Body of pancreas (tissue), 4 donors: ENCODE measurements at regions of chr9 and their contacts with region 1.

Region 1: GRCh38 chr9:6757456-6758247 is at the start of gene KDM4C:
- DNase-seq: peak; percentile 95 to 97 (median 96)
- ATAC-seq: peak; percentile 91
- H3K4me3 ChIP-seq: peak within 1 kb of the TSS; percentile 69 to 98
- H3K27ac ChIP-seq: peak within 1 kb of the TSS; percentile 96 to 97 (median 96)
- H3K4me1 ChIP-seq: peaks cover 31% of the 10 kb centered on the region
- H3K27me3 ChIP-seq: no peaks in the 10 kb centered on the region
- CTCF ChIP-seq: peak in 2 of 7 experiments; percentile 1 to 16
- POLR2A ChIP-seq: peak; percentile 96 to 98 (median 98)
- total RNA-seq, gene KDM4C: 40.5 to 48.5 TPM

Region 2: DNA sequence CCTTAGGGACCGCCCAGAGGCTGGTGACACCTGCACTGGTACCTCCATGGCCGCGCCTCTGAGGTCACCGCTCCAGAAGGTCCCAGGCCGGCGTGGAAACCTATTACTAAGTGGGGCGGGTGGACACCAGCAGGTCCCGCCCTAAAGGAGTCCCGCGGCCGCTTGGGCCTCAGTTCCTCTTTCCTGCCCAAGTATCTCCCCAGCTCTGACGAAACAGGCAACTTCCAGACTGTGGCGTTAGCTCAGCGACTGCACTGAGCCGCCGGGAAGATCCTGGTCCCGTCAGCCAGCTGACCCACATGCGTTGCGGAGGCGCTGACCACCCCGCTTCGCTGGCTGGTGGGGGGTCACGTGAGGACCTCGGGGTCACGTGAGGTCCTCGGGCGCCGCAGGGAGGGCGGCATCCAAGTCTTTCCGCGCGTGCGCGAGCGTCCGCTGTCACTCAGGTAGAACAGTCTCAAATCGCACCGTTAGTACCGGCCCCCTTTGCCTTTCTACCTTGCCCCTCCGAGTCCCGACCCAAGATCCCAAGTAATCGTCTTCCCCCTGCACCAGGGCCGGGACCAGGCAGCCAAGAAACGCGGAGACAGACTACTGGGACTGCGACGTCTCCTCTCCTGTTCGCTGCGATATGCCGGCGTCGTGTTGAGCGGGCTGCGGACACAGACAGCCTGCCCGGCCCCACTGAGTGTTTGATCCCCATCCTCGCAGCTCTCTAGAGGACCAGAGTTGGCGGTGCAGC is 53.6 kb before region 1 on chr9:
- intact Hi-C with region 1: loop called (anchors 10 kb)
- DNase-seq: peak; percentile 86 to 96 (median 91)
- ATAC-seq: peak; percentile 94
- H3K4me3 ChIP-seq: peak overlapping the region; percentile 5 to 63
- H3K27ac ChIP-seq: peak overlapping the region; percentile 91 to 94 (median 94)
- H3K4me1 ChIP-seq: peaks cover 4% of the 10 kb centered on the region
- H3K27me3 ChIP-seq: no peaks in the 10 kb centered on the region
- CTCF ChIP-seq: no peak
- POLR2A ChIP-seq: peak; percentile 67 to 88 (median 86)